Activated naive CD4-positive, alpha-beta T cell treated with anti-CD3 and anti-CD28 coated beads for 36 hours (primary cell): ENCODE measurements at regions of chr5 and their contacts with region 1.

Region 1: GRCh38 chr5:95822542-95823181 is at the start of gene GLRX:
- DNase-seq: peak; percentile 64
- H3K4me3 Mint-ChIP-seq: peak within 1 kb of the TSS; percentile 96
- H3K27ac Mint-ChIP-seq: peak within 1 kb of the TSS; percentile 98
- H3K4me1 Mint-ChIP-seq: peaks cover 61% of the 10 kb centered on the region
- H3K27me3 Mint-ChIP-seq: no peaks in the 10 kb centered on the region
- total RNA-seq, gene GLRX: 50.4 to 51.1 TPM

Region 2: DNA sequence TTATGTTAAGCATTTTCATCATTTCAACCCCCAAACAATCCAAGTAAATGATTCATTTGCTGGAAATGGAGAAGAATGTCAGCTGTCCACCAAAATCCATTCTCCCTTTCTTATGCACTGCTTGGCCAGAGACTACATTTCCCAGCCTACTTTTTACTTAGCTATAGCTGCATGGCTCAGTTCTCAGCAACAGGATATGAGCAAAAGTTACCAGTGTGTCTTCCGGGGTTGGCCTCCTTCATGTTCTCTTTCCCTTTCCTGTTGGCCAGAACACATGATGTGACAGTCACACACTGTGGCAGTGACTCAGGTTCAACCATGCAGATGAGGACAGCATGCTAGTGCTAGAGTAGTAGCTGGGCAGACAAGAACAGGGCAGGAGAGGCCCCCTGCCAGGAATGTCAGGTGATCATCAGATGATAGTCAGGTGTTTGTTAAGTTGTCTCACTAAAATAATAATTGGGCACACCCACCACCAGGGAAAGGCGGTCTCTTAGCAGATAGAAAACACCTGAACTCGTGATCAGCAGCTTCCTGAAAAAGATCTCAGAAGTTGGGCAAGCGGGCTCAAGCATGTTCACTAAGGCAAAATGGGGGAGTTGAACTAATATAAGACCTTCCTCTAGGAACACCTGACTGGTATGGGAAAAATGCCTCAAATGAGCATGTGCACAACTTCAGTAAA is 190.5 kb before region 1 on chr5:
- CTCF ChIA-PET with region 1: no interaction called
- intact Hi-C with region 1: loop called (anchors 1 kb)
- DNase-seq: peak; percentile 89
- H3K4me3 Mint-ChIP-seq: peak overlapping the region; percentile 53
- H3K27ac Mint-ChIP-seq: peak overlapping the region; percentile 94
- H3K4me1 Mint-ChIP-seq: peaks cover 20% of the 10 kb centered on the region
- H3K27me3 Mint-ChIP-seq: no peaks in the 10 kb centered on the region

Region 3: DNA sequence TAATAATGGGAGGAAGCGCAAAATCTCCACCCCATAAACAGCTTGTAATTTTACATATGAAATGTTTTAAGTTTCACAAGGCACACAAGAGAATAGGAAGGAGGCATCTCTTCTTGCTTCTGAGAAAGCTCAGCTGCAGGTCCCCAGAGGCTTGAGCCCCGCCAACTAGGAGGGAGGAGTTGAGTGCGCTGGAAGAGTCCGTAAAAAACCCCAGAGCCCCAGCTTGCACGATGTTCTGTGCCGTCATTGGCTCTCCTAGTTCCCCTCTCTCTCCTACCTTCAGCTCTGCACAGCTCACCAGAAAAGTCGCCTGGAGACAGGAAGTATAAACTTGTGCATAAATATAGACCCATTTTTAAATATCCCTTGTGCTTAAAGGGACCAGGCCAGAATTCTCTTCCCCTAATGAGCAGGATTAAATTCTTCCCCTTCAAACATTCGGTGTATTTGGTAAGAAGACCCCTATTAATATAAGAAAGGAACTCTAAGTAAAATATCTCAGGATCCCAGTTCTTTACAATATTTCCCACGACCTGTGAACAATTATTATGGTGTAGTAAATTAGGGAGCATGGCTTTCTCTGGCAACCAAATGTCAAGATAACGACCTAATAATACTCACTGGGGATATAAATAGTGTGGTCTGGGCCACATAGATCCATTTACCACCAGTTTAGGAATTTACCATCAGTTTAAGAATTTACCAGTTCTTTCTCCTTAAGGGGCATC is 13.8 kb before region 1 on chr5:
- CTCF ChIA-PET with region 1: interaction called, 9 read pairs
- intact Hi-C with region 1: loop called (anchors 1 kb)
- DNase-seq: peak; percentile 92
- H3K4me3 Mint-ChIP-seq: peak overlapping the region; percentile 57
- H3K27ac Mint-ChIP-seq: peak overlapping the region; percentile 81
- H3K4me1 Mint-ChIP-seq: peaks cover 55% of the 10 kb centered on the region
- H3K27me3 Mint-ChIP-seq: no peaks in the 10 kb centered on the region

Region 4: DNA sequence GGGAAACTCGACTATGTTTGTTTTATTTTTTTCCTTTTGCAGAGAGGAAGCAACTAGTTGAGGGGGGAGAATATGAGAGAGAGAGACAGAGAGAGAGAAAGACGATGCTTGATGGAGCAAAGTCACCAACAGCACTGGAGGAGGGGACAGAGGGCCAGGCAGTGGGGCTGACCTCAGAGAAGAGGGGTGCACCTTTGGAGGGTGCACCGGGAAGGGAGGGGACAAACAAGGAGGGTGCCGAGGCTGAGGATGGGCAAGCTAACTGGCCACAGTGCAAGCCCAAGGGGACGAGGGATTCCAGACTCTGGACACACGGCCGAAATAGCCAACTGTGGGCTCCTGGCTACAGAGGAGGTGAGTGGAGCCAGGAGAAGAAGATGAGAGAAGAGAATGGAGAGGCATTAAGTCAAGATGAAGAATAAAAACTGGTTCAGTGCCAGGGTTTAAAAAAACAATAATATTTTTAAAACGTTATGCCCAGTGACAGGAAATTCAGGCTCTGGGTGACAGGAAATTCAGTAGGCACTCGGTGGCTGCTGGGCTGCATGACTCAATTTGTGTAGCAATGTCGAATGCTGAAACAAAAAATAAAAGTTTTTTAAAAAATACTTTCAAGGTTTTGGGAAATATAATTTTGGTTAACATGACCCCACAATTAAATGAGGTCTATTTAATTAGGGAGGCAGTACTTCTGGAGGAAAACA is 13.2 kb after region 1 on chr5:
- CTCF ChIA-PET with region 1: interaction called, 61 read pairs
- intact Hi-C with region 1: loop called (anchors 1 kb)
- DNase-seq: peak; percentile 57
- H3K4me3 Mint-ChIP-seq: peak overlapping the region; percentile 77
- H3K27ac Mint-ChIP-seq: peak overlapping the region; percentile 92
- H3K4me1 Mint-ChIP-seq: peaks cover 47% of the 10 kb centered on the region
- H3K27me3 Mint-ChIP-seq: no peaks in the 10 kb centered on the region

Region 5: GRCh38 chr5:96146675-96147074 is 324.0 kb after region 1 on chr5:
- CTCF ChIA-PET with region 1: no interaction called
- intact Hi-C with region 1: no loop called
- DNase-seq: peak; percentile 19
- H3K4me3 Mint-ChIP-seq: no peak overlapping the region
- H3K27ac Mint-ChIP-seq: no peak overlapping the region
- H3K4me1 Mint-ChIP-seq: peaks cover 5% of the 10 kb centered on the region
- H3K27me3 Mint-ChIP-seq: peaks cover 3% of the 10 kb centered on the region

Region 6: GRCh38 chr5:96876292-96876850 is 1053.7 kb after region 1 on chr5 and contains the start of gene ERAP2:
- CTCF ChIA-PET with region 1: no interaction called
- intact Hi-C with region 1: loop called (anchors 5 kb)
- DNase-seq: no peak
- H3K4me3 Mint-ChIP-seq: peak within 1 kb of the TSS; percentile 90
- H3K27ac Mint-ChIP-seq: peak within 1 kb of the TSS; percentile 95
- H3K4me1 Mint-ChIP-seq: peaks cover 68% of the 10 kb centered on the region
- H3K27me3 Mint-ChIP-seq: no peaks in the 10 kb centered on the region
- total RNA-seq, gene ERAP2: 108 to 111 TPM

Region 7: GRCh38 chr5:96963267-96963666 is 1140.6 kb after region 1 on chr5:
- CTCF ChIA-PET with region 1: no interaction called
- intact Hi-C with region 1: loop called (anchors 10 kb)
- DNase-seq: peak; percentile 47
- H3K4me3 Mint-ChIP-seq: peak overlapping the region; percentile 69
- H3K27ac Mint-ChIP-seq: peak overlapping the region; percentile 95
- H3K4me1 Mint-ChIP-seq: peaks cover 73% of the 10 kb centered on the region
- H3K27me3 Mint-ChIP-seq: no peaks in the 10 kb centered on the region